RWPE1 (cell line): ENCODE measurements at regions of chr20 and their contacts with region 1.

Region 1: GRCh38 chr20:62065669-62066338 is at the start of gene TAF4:
- DNase-seq: peak; percentile 100
- H3K27ac ChIP-seq: peak within 1 kb of the TSS; percentile 83
- CTCF ChIP-seq: no peak

Region 2: GRCh38 chr20:62085206-62085605 is 19.4 kb after region 1 on chr20:
- CTCF ChIA-PET with region 1: no interaction called
- POLR2A ChIA-PET with region 1: no interaction called
- DNase-seq: no peak
- H3K27ac ChIP-seq: no peak overlapping the region
- CTCF ChIP-seq: no peak

Region 3: DNA sequence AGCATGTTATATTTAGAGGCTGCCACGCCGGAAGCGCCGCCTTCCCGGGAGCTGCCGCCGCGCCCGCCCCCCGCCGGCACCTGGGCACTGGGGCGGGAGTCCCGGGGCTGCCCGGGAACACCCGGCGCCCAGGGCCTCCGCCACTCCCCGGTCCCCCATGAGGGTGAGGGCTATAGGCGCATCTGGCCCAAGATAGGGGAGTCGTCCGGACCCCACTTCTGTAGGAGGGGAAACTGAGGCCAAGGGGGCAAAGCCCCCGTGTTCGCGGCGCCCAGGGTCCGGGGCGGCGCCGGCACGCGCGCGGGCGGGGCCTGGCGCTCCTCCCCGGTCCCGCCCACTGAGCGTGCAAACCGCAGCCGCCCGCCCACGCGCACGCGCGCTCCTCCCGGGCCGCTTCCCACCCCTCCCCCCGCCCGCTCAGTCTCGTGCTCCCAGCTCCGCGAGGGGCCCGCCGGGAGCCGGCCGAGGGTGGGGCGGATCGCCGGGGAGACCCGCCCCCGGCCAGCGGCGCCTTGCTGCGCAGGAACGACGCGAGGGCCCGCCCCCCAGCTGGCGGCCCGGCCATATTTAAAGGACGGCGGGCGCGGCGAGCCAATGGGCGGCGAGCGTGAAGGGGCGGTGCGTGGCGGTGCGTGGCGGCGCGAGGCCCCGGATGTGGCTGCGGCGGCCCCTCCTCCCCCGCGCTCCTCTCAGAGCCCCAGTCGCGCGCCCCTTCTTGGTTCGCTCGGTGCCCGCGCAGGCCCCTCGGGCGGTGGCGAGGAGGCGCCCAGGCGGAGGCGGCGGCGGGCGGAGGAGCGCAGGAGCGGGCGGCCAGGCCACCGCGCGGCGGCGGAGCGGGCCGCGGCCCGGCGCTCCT is 56.2 kb after region 1 on chr20 and contains the start of gene LSM14B:
- CTCF ChIA-PET with region 1: interaction called, 5 read pairs
- POLR2A ChIA-PET with region 1: interaction called, 12 read pairs
- DNase-seq: peak; percentile 100
- H3K27ac ChIP-seq: peak within 1 kb of the TSS; percentile 98
- CTCF ChIP-seq: no peak